ENCODE measurements at regions of chr11 and their contacts with region 1.

Region 1: GRCh38 chr11:126310228-126310991 is 6.5 kb downstream of the DCPS start:
- DNase-seq: no peak
- H3K4me3 ChIP-seq: no peak overlapping the region
- H3K27ac ChIP-seq: no peak overlapping the region
- H3K27me3 ChIP-seq: no peaks in the 10 kb centered on the region
- CTCF ChIP-seq: peak; percentile 92

Region 2: GRCh38 chr11:126355324-126355925 is 45.0 kb after region 1 on chr11 and contains the start of gene ST3GAL4:
- CTCF ChIA-PET with region 1: interaction called, 20 read pairs
- POLR2A ChIA-PET with region 1: no interaction called
- DNase-seq: no peak
- H3K4me3 ChIP-seq: peak within 1 kb of the TSS; percentile 93
- H3K27ac ChIP-seq: peak within 1 kb of the TSS; percentile 62
- H3K27me3 ChIP-seq: no peaks in the 10 kb centered on the region
- CTCF ChIP-seq: no peak
- polyA plus RNA-seq, gene ST3GAL4: 13.1 and 15.3 TPM in 2 replicates

Region 3: DNA sequence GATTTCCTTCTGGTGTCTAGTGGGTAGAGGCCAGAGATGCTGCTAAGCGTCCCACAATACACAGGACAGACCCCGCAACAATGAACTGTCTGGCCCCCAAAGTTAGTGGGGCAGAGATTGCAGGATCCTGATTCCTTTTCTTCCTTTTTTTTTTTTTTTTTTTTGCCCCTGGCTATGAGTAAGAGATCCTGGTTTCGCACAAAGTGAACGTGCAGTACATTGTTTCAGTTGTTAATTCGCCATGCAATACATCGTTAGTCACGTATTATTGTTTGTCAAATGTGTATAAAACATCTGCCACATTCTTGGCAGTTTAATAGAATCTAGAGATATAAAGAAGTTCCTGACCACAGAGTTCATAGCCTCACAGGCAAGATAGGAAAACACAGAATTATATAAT is 65.3 kb after region 1 on chr11:
- CTCF ChIA-PET with region 1: no interaction called
- POLR2A ChIA-PET with region 1: no interaction called
- DNase-seq: no peak
- H3K4me3 ChIP-seq: no peak overlapping the region
- H3K27ac ChIP-seq: no peak overlapping the region
- H3K27me3 ChIP-seq: no peaks in the 10 kb centered on the region
- CTCF ChIP-seq: no peak

Region 4: GRCh38 chr11:126416542-126417090 is 106.2 kb after region 1 on chr11:
- CTCF ChIA-PET with region 1: interaction called, 20 read pairs
- POLR2A ChIA-PET with region 1: no interaction called
- DNase-seq: no peak
- H3K4me3 ChIP-seq: peak overlapping the region; percentile 56
- H3K27ac ChIP-seq: no peak overlapping the region
- H3K27me3 ChIP-seq: no peaks in the 10 kb centered on the region
- CTCF ChIP-seq: no peak

Region 5: GRCh38 chr11:126431401-126432064 is 121.1 kb after region 1 on chr11:
- CTCF ChIA-PET with region 1: interaction called, 11 read pairs
- POLR2A ChIA-PET with region 1: no interaction called
- DNase-seq: no peak
- H3K4me3 ChIP-seq: no peak overlapping the region
- H3K27ac ChIP-seq: peak overlapping the region; percentile 21
- H3K27me3 ChIP-seq: no peaks in the 10 kb centered on the region
- CTCF ChIP-seq: no peak

Region 6: DNA sequence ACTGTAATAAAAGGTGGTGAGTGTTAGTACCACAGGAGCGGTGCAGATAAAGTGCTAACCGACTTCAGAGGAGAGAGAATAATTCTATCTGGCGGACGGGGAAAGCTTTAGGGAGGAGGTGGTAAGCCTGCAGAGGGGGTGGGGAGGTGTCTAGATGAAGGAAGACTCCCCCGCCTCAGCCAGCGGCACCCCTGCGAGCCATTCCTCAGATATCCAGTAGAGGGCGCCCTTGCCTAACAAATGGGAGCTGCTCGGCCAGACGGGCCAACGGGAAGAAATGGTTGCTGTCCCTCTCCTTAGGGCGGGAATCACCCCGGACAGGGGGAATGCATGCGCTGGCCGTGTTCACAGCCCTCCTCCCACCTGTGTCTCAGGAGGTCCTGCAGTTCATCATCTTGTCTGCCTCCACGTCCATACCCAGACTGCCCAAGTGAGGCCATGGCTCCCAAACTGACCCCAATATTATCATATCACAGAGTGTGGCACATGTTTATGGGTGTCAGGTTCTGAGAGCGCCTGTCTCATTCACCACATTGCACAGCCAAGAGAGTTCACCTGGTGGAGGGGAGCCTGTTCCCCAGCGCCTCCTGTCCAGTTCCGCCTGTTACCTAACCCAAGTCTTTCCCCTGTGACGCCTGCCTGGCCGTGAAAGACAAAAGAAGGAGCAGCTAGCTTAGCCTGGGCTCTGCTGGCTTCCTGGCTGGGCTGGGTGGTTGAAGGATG is 130.5 kb after region 1 on chr11:
- CTCF ChIA-PET with region 1: interaction called, 25 read pairs
- POLR2A ChIA-PET with region 1: no interaction called
- DNase-seq: no peak
- H3K4me3 ChIP-seq: no peak overlapping the region
- H3K27ac ChIP-seq: no peak overlapping the region
- H3K27me3 ChIP-seq: no peaks in the 10 kb centered on the region
- CTCF ChIP-seq: peak; percentile 92

Measured in AG04450 (cell line).